Activated CD4-positive, alpha-beta T cell treated with anti-CD3 and anti-CD28 coated beads for 36 hours (primary cell): ENCODE measurements at regions of chr6 and their contacts with region 1.

Region 1: DNA sequence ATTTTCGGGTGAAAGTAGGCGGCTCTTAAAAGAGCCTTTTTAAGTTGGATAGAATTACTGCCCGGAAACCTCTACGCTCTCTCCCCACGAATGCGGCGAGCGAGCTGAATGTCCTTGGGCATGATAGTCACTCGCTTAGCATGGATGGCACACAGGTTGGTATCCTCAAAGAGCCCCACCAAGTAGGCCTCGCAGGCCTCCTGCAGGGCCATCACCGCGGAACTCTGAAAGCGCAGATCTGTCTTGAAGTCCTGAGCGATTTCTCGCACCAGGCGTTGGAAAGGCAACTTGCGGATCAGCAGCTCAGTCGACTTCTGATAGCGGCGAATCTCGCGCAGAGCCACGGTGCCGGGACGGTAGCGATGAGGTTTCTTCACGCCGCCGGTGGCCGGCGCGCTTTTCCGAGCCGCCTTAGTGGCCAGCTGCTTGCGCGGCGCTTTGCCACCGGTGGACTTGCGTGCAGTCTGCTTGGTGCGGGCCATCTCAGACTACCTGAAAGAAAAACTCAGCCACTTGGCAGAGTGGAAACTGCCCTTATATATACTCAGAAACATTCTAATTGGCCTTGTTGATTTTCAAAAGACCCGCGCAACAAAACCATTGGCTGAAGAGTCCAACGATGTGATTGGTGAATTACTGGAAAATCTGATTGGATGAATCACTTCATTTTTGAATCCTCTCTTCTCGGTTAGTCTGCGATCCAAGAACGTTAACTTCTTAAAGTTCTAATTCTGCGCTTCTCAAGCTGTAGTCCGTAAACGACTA is 93.9 kb upstream of the BTN3A2 start:
- DNase-seq: peak; percentile 85
- ATAC-seq: peak; percentile 43
- H3K4me3 Mint-ChIP-seq: no peak overlapping the region
- H3K27ac Mint-ChIP-seq: no peak overlapping the region
- H3K4me1 Mint-ChIP-seq: peaks cover 23% of the 10 kb centered on the region
- H3K27me3 Mint-ChIP-seq: no peaks in the 10 kb centered on the region

Region 2: GRCh38 chr6:25173951-25174474 is 1097.1 kb before region 1 on chr6:
- CTCF ChIA-PET with region 1: no interaction called
- POLR2A ChIA-PET with region 1: no interaction called
- intact Hi-C with region 1: no loop called
- DNase-seq: no peak
- ATAC-seq: peak; percentile 72
- H3K4me3 Mint-ChIP-seq: no peak overlapping the region
- H3K27ac Mint-ChIP-seq: peak overlapping the region; percentile 35
- H3K4me1 Mint-ChIP-seq: peaks cover 42% of the 10 kb centered on the region
- H3K27me3 Mint-ChIP-seq: no peaks in the 10 kb centered on the region

Region 3: GRCh38 chr6:26175428-26176181 is 95.5 kb before region 1 on chr6:
- CTCF ChIA-PET with region 1: interaction called, 4 read pairs
- POLR2A ChIA-PET with region 1: interaction called, 17 read pairs
- intact Hi-C with region 1: no loop called
- DNase-seq: peak; percentile 69
- ATAC-seq: peak; percentile 14
- H3K4me3 Mint-ChIP-seq: peak overlapping the region; percentile 30
- H3K27ac Mint-ChIP-seq: peak overlapping the region; percentile 80
- H3K4me1 Mint-ChIP-seq: peaks cover 33% of the 10 kb centered on the region
- H3K27me3 Mint-ChIP-seq: no peaks in the 10 kb centered on the region

Region 4: GRCh38 chr6:26204332-26205165 is 66.5 kb before region 1 on chr6:
- CTCF ChIA-PET with region 1: no interaction called
- POLR2A ChIA-PET with region 1: interaction called, 65 read pairs
- intact Hi-C with region 1: loop called (anchors 1 to 2 kb)
- DNase-seq: peak; percentile 92
- ATAC-seq: peak; percentile 69
- H3K4me3 Mint-ChIP-seq: no peak overlapping the region
- H3K27ac Mint-ChIP-seq: no peak overlapping the region
- H3K4me1 Mint-ChIP-seq: peaks cover 20% of the 10 kb centered on the region
- H3K27me3 Mint-ChIP-seq: no peaks in the 10 kb centered on the region

Region 5: DNA sequence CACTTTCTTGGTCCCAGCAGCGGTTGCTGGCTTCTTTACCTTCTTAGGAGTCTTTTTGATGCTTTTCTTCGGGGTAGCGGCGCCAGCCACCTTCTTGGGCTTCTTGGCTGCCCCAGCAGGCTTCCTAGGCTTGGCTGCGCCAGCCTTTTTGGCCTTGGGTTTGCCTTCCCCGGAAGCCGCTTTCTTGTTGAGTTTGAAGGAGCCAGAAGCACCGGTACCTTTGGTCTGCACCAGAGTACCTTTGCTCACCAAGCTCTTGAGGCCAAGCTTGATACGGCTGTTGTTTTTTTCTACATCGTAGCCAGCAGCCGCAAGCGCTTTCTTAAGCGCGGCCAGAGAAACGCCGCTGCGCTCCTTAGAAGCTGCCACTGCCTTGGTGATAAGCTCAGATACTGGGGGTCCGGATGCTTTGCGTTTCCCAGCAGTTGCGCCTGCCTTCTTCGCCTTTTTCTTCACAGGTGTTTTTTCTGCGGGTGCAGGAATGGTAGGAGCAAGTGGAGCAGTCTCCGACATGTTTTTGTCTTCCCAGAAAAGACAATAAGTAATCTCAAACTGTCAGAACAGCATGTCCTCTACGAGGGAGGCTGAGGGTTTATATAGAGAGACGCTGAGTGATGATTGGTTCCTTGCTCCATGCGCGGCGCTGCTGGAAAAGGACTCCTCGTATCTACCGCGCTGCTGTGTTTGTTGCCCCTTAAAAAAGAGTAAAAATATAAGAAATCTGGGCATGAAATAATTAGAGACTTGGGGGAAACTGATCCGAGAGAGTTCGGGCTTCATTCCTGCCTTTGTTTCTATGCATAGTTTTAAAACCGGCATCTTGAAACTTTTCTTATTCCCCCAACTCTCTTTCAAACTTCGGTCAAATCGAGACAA is 36.4 kb before region 1 on chr6:
- CTCF ChIA-PET with region 1: interaction called, 5 read pairs
- POLR2A ChIA-PET with region 1: interaction called, 95 read pairs
- intact Hi-C with region 1: loop called in 1 of 2 experiments (anchors 1 kb)
- DNase-seq: peak; percentile 81
- ATAC-seq: peak; percentile 73
- H3K4me3 Mint-ChIP-seq: peak overlapping the region; percentile 77
- H3K27ac Mint-ChIP-seq: peak overlapping the region; percentile 100
- H3K4me1 Mint-ChIP-seq: peaks cover 31% of the 10 kb centered on the region
- H3K27me3 Mint-ChIP-seq: peaks cover 2% of the 10 kb centered on the region

Region 6: DNA sequence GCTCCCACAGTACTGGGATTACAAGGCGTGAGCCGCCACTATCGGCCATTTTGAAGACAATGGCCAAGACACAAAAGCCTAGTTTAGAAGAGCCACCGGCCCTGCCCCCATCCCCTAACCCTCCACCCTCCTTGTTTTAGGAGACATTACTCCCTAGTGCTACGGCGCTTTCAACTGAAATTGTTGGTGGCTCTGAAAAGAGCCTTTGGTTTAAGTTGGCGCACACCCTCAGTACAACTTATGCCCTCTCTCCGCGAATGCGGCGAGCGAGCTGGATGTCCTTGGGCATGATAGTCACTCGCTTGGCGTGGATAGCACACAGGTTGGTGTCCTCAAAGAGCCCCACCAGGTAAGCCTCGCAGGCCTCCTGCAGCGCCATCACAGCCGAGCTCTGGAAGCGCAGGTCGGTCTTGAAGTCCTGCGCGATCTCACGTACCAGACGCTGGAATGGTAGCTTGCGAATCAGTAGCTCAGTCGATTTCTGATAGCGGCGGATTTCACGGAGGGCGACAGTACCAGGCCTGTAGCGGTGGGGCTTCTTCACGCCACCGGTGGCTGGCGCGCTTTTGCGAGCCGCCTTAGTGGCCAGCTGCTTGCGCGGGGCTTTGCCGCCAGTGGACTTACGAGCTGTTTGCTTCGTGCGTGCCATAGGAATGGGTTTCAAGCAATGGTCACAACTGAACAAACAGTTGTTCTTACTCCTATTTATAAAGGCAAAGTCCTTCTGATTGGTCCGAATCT is 21.0 kb before region 1 on chr6:
- CTCF ChIA-PET with region 1: interaction called, 7 read pairs
- POLR2A ChIA-PET with region 1: interaction called, 5 read pairs
- intact Hi-C with region 1: loop called (anchors 1 kb)
- DNase-seq: peak; percentile 85
- ATAC-seq: peak; percentile 63
- H3K4me3 Mint-ChIP-seq: peak overlapping the region; percentile 86
- H3K27ac Mint-ChIP-seq: peak overlapping the region; percentile 97
- H3K4me1 Mint-ChIP-seq: peaks cover 14% of the 10 kb centered on the region
- H3K27me3 Mint-ChIP-seq: no peaks in the 10 kb centered on the region

Region 7: DNA sequence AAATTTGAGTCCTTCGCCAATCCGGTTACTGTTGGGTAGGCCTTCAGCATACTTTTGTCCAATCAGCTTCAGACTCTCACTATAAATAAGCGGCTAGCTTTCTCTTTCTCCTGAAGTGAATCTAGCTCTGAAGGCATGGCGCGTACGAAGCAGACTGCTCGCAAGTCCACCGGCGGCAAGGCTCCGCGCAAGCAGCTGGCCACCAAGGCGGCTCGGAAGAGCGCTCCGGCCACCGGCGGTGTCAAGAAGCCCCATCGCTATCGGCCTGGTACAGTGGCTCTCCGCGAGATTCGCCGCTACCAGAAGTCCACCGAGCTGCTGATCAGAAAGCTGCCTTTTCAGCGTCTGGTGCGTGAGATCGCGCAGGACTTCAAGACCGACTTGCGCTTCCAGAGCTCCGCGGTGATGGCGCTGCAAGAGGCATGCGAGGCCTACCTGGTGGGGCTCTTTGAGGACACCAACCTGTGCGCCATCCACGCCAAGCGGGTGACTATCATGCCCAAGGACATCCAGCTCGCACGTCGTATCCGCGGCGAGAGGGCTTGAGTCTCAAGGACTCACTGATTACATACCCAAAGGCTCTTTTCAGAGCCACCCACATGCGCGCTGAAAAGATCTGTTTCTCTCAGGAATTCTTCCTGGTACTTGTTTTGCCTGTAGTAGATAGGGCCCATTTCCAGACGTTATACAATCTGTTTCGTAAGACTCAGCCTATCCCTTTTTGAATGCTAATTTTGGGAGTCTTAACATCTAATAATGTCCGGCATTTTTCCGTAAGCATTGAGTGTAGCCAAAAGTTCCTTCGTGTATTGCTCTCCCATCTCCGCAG is 1539.1 kb after region 1 on chr6:
- CTCF ChIA-PET with region 1: no interaction called
- POLR2A ChIA-PET with region 1: interaction called, 3 read pairs
- intact Hi-C with region 1: loop called in 1 of 2 experiments (anchors 5 kb)
- DNase-seq: peak; percentile 83
- ATAC-seq: peak; percentile 33
- H3K4me3 Mint-ChIP-seq: peak overlapping the region; percentile 86
- H3K27ac Mint-ChIP-seq: peak overlapping the region; percentile 95
- H3K4me1 Mint-ChIP-seq: peaks cover 49% of the 10 kb centered on the region
- H3K27me3 Mint-ChIP-seq: no peaks in the 10 kb centered on the region